Breast epithelium (tissue), 4 donors: ENCODE measurements at regions of chr6 and their contacts with region 1.

Region 1: GRCh38 chr6:45619994-45620471 is 242.3 kb upstream of the SUPT3H start:
- DNase-seq: no peak
- H3K4me3 ChIP-seq: no peak overlapping the region
- H3K27ac ChIP-seq: no peak overlapping the region
- H3K4me1 ChIP-seq: no peaks in the 10 kb centered on the region
- H3K27me3 ChIP-seq: no peaks in the 10 kb centered on the region
- CTCF ChIP-seq: no peak
- POLR2A ChIP-seq: no peak

Region 2: DNA sequence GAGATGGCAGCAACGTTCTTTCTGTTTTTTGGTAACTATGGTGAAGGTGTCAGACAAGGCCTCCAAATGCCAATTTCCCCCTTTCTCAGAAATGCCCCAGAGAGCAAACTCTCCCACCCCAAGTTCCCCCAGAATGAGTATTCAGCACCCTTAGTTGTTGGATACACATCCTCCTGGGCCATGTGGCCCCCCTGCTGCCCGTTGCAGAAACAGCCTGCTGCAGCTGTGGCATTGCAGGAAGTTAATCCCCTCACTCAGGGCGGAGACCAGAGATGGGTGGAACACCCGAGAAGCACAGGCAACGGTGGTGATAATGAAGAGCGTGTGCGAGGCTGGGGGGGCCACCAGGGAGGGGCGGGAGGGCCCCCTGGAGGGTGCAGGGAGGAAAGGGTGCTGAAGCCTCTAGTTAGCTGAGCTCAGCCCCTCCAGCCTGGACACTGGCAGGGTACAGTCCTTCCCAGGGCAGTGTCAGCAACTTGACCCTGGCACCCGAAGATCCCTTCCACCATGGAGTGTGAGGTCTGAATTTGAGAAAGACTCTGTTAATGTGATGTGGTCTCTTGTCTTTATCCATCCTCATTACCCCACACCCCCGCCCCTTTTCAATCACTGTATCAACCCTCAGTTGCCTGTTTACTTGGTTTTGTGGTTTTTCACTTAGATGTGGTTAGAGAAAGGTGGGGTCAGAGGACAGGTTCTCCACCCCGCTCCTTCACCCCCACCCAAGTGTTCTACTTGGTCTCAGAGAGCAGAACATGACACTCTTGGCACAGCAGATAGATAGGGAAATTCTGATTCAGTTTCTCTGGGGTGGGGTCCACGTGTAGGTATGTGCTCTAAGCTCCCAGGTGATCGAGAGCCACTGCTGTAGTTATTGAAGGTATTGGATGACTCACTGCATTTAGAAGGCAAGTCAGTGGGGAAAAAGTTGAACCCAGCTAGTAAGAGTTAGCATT is 33.5 kb before region 1 on chr6:
- intact Hi-C with region 1: loop called (anchors 1 kb)
- DNase-seq: no peak
- H3K4me3 ChIP-seq: no peak overlapping the region
- H3K27ac ChIP-seq: no peak overlapping the region
- H3K4me1 ChIP-seq: no peaks in the 10 kb centered on the region
- H3K27me3 ChIP-seq: no peaks in the 10 kb centered on the region
- CTCF ChIP-seq: no peak
- POLR2A ChIP-seq: no peak

Region 3: DNA sequence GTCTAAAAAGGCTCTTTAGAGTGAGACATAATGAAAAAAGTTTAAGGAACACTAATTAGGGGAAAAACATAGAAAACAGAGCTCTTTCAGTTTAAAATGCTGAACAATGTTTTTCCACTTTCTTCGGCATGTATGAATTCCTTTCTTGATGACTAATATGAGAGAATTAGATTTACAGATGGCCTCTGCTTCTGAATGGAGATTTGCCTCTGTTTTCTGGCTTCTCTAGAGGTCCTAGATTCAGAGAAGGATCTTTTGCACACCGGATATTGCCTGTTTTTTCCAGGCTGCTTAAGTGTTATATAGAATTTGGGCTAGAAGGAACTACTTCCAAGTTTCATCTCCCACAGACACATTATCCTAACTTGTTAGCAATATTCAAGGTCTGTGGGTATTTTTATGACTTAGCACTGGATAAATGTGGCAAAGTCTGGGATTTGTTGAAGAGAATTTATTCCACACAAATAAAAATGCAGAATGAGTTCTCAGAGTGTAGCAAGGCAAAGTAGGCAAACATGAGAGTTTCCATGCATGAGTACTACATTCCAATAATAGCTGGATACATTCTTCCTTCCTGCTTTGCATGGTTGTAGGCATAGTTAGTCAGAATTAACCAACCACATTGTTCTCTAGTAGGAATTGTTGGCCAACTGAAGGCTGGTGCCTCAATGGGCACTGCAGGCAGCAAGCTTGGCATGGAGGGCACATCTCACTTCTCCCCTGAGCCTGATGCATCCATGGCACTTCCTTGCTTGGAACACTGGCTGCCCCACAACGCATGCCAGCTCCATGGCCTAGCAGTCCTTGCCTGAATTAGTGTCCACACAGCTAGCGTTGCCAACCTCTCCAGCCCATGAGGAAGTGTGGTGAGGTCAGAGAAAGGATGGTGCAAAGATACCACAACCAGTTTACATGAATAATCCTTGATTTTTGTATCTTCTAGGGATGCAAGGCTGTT is 171.5 kb after region 1 on chr6:
- intact Hi-C with region 1: no loop called
- DNase-seq: no peak
- H3K4me3 ChIP-seq: no peak overlapping the region
- H3K27ac ChIP-seq: no peak overlapping the region
- H3K4me1 ChIP-seq: no peaks in the 10 kb centered on the region
- H3K27me3 ChIP-seq: no peaks in the 10 kb centered on the region
- CTCF ChIP-seq: no peak
- POLR2A ChIP-seq: no peak

Region 4: DNA sequence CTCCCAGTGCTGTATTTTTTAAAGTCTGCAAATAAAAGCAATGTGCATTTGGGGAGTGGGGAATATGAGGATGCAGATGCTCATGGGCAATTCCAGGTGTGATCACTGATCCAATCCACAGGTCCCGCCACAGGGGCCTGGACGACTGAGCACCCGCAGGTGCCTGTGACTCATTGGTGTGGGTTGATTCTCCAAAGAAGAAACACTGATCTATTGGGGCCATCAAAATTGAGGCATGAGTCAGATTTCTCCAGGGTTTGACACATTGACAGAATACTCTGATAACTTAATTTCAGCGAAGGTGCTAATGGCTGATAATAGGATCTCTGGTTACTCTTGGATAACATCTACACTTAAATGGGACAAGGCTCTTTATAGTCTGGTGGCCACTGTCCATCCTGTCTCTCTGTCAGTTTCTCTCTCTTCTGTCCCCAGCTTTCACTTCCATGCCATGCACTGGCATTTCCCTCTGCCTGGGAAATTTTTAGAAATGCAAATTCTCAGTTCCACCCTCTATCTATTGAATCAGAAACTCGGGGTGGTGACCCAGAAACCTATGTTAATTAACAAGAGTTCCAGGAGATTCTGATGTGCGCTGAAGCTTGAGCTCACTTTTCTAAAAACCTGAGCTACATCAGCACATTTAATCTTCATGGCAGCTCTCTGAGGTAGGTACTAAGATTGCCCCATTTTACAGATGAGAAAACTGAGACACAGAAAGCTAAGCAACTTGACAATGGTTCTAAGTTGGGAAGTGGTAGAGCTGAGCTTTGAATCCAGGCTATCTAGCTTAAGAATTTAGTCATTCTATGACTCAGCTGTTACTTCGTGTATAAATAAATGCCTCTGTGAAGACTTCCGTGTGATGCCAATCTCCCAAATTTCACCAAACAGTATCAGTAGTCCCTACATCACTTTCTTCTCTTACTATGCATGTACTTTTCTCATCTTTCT is 881.4 kb after region 1 on chr6:
- intact Hi-C with region 1: no loop called
- DNase-seq: no peak
- H3K4me3 ChIP-seq: no peak overlapping the region
- H3K27ac ChIP-seq: no peak overlapping the region
- H3K4me1 ChIP-seq: no peaks in the 10 kb centered on the region
- H3K27me3 ChIP-seq: no peaks in the 10 kb centered on the region
- CTCF ChIP-seq: no peak
- POLR2A ChIP-seq: no peak